ENCODE measurements at regions of chr1 and their contacts with region 1.

Region 1: DNA sequence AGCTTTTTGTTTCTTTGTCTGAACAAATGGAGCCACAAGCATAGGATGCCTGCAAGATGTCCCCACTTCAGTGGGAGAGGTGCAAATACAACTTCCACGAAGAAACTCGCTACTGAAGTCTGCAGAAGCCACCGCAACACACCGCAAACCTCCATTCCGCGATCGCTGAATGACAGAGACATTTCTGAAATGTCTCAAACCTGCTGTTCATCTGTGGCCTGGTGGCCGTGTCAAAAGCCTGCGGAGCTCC is 1.0 kb downstream of the TP53BP2 start:
- DNase-seq: no peak
- H3K4me3 ChIP-seq: peak overlapping the region; percentile 59 to 97
- H3K27ac ChIP-seq: peak overlapping the region; percentile 99 to 100
- H3K4me1 ChIP-seq: peaks cover 0 to 3% of the 10 kb centered on the region in 2 donors
- H3K27me3 ChIP-seq: no peaks in the 10 kb centered on the region
- CTCF ChIP-seq: no peak
- POLR2A ChIP-seq: no peak

Region 2: DNA sequence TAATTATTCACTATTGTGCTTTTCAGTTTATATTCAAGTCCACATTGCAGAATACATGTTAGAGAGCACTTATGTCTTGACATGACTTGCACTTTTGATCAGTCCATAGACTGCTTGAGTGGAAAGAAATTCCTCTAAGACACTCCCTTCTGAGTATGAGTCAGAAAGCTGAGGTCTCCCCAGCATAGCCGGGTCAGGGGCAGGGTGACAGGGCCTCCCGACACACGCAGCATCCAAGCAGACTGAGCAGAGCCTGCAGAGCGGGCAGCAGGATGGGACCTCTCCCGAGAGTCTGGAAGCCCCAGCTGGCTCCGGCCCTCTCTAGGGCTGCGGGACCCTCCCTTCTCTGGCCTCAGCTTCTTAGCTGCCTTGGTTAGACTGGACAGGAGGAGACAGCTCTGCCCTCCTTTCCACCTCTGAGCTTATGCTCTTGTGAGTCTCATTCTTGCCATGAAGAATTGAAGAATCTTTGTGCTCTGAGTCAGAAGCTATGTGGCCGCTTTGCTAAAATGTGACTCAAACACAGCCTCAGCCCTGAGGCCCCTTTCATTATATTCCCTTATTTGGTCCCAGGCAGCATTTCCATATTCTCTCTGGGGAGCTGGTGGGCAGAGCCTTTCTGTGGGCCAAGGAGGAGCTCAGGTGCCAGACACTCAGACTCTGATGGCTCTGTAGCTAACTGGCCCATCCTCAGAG is 143.6 kb before region 1 on chr1:
- intact Hi-C with region 1: loop called (anchors 5 kb)
- DNase-seq: peak; percentile 60 to 63
- H3K4me3 ChIP-seq: no peak overlapping the region
- H3K27ac ChIP-seq: peak overlapping the region; percentile 86 to 89
- H3K4me1 ChIP-seq: peaks cover 0 to 13% of the 10 kb centered on the region in 2 donors
- H3K27me3 ChIP-seq: no peaks in the 10 kb centered on the region
- CTCF ChIP-seq: no peak
- POLR2A ChIP-seq: peak in 1 of 2 donors; percentile 23

Region 3: GRCh38 chr1:223738465-223739365 is 106.0 kb before region 1 on chr1:
- intact Hi-C with region 1: no loop called
- DNase-seq: peak in 1 of 2 donors; percentile 61
- H3K4me3 ChIP-seq: no peak overlapping the region
- H3K27ac ChIP-seq: peak overlapping the region; percentile 42 to 52
- H3K4me1 ChIP-seq: peaks cover 3 to 4% of the 10 kb centered on the region in 2 donors
- H3K27me3 ChIP-seq: no peaks in the 10 kb centered on the region
- CTCF ChIP-seq: peak in 1 of 4 experiments; percentile 5
- POLR2A ChIP-seq: no peak

Measured in uterus (tissue), 4 donors.